ENCODE measurements at regions of chr2 and their contacts with region 1.

Region 1: GRCh38 chr2:35973132-35973736 is 382.3 kb upstream of the CRIM1 start:
- DNase-seq: peak; percentile 46
- ATAC-seq: peak; percentile 98
- H3K4me3 ChIP-seq: no peak overlapping the region
- H3K27ac ChIP-seq: no peak overlapping the region
- H3K4me1 ChIP-seq: no peaks in the 10 kb centered on the region
- H3K27me3 ChIP-seq: no peaks in the 10 kb centered on the region
- CTCF ChIP-seq: peak; percentile 69
- EP300 ChIP-seq: no peak
- POLR2A ChIP-seq: no peak
- RAD21 ChIP-seq: peak; percentile 39

Region 2: DNA sequence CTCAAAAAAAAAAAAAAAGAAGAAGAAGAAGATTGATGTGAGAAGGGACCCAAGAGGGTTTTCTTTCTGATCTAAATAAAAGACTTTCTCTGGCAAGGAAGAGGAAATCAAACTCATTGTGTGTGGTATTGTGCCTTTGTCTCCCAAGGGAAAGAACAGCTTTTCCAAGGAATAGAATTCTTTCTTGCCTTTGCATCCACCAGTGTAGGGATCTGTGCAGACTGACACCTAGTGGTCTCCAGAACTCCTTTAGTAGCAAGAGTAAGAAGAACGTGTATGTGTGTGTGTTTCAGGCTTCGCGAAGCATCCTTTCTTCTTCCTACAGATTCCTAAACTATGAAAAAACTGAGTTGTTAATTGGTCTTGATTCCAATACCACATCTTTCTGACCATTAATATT is 348.9 kb after region 1 on chr2:
- CTCF ChIA-PET with region 1: no interaction called
- POLR2A ChIA-PET with region 1: no interaction called
- in situ Hi-C with region 1: loop called (anchors 10 kb)
- intact Hi-C with region 1: loop called (anchors 1 kb)
- DNase-seq: peak; percentile 40
- ATAC-seq: peak; percentile 88
- H3K4me3 ChIP-seq: no peak overlapping the region
- H3K27ac ChIP-seq: no peak overlapping the region
- H3K4me1 ChIP-seq: no peaks in the 10 kb centered on the region
- H3K27me3 ChIP-seq: no peaks in the 10 kb centered on the region
- CTCF ChIP-seq: peak; percentile 66
- EP300 ChIP-seq: no peak
- POLR2A ChIP-seq: no peak
- RAD21 ChIP-seq: no peak

Region 3: DNA sequence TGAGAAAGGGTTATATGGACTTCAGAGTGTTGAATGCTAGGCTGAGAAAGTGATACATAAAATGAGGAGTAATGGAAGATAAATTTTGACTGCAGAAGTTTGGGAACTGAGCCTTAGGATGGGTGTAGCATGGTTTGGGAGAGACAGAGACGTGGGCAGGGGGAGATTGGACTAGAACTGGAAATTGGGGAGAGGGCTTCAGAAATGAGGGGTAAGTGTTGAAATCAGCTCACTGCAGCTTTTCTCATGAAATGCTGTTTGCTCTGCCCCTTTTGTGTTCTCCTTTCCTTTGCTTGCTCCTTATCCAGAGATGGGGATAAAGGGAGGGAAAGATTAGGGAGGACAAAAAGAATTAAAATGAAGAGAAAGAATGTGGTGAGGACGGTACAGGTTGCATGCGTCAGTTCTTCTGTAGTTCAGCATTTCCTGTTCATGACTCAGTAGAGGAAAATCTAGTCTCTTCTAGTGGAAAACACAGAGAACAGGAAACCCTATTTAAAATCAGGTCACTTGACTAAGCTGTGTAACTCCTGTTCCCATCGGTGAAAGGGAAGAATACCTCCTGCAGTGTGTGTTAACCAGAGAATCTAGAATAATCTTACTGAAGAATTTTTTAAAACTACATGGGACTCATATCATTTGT is 487.9 kb after region 1 on chr2:
- CTCF ChIA-PET with region 1: no interaction called
- POLR2A ChIA-PET with region 1: no interaction called
- in situ Hi-C with region 1: no loop called
- intact Hi-C with region 1: loop called (anchors 1 kb)
- DNase-seq: peak; percentile 46
- ATAC-seq: no peak
- H3K4me3 ChIP-seq: no peak overlapping the region
- H3K27ac ChIP-seq: no peak overlapping the region
- H3K4me1 ChIP-seq: peaks cover 33% of the 10 kb centered on the region
- H3K27me3 ChIP-seq: no peaks in the 10 kb centered on the region
- CTCF ChIP-seq: no peak
- EP300 ChIP-seq: no peak
- POLR2A ChIP-seq: no peak
- RAD21 ChIP-seq: no peak

Region 4: GRCh38 chr2:36507408-36507812 is 534.2 kb after region 1 on chr2:
- CTCF ChIA-PET with region 1: no interaction called
- POLR2A ChIA-PET with region 1: no interaction called
- in situ Hi-C with region 1: no loop called
- intact Hi-C with region 1: loop called (anchors 10 kb)
- DNase-seq: peak; percentile 79
- ATAC-seq: peak; percentile 92
- H3K4me3 ChIP-seq: no peak overlapping the region
- H3K27ac ChIP-seq: no peak overlapping the region
- H3K4me1 ChIP-seq: peaks cover 41% of the 10 kb centered on the region
- H3K27me3 ChIP-seq: no peaks in the 10 kb centered on the region
- CTCF ChIP-seq: peak; percentile 91
- EP300 ChIP-seq: no peak
- POLR2A ChIP-seq: no peak
- RAD21 ChIP-seq: peak; percentile 86

Region 5: GRCh38 chr2:36672199-36672598 is 699.0 kb after region 1 on chr2:
- CTCF ChIA-PET with region 1: no interaction called
- POLR2A ChIA-PET with region 1: no interaction called
- in situ Hi-C with region 1: no loop called
- intact Hi-C with region 1: loop called (anchors 2 kb)
- DNase-seq: peak; percentile 52
- ATAC-seq: peak; percentile 73
- H3K4me3 ChIP-seq: no peak overlapping the region
- H3K27ac ChIP-seq: no peak overlapping the region
- H3K4me1 ChIP-seq: no peaks in the 10 kb centered on the region
- H3K27me3 ChIP-seq: no peaks in the 10 kb centered on the region
- CTCF ChIP-seq: peak; percentile 68
- EP300 ChIP-seq: no peak
- POLR2A ChIP-seq: no peak
- RAD21 ChIP-seq: peak; percentile 67

Measured in HepG2 (cell line).